ENCODE measurements at regions of chr11 and their contacts with region 1.

Region 1: GRCh38 chr11:128323381-128323780 is 264.0 kb downstream of the ETS1 start:
- DNase-seq: peak in 6 of 9 experiments; percentile 13 to 82 (median 60)
- ATAC-seq: no peak
- H3K4me3 ChIP-seq: no peak overlapping the region
- H3K4me3 Mint-ChIP-seq: peak overlapping the region; percentile 16
- H3K27ac ChIP-seq: peak overlapping the region; percentile 87 to 90
- H3K27ac Mint-ChIP-seq: peak overlapping the region; percentile 94
- H3K4me1 ChIP-seq: peaks cover 93% of the 10 kb centered on the region
- H3K4me1 Mint-ChIP-seq: peaks cover 85% of the 10 kb centered on the region
- H3K27me3 ChIP-seq: no peaks in the 10 kb centered on the region
- H3K27me3 Mint-ChIP-seq: no peaks in the 10 kb centered on the region
- CTCF ChIP-seq: peak; percentile 37

Region 2: GRCh38 chr11:127962416-127962815 is 361.0 kb before region 1 on chr11:
- CTCF ChIA-PET with region 1: no interaction called
- POLR2A ChIA-PET with region 1: no interaction called
- intact Hi-C with region 1: no loop called
- DNase-seq: no peak
- ATAC-seq: no peak
- H3K4me3 ChIP-seq: no peak overlapping the region
- H3K4me3 Mint-ChIP-seq: no peak overlapping the region
- H3K27ac ChIP-seq: no peak overlapping the region
- H3K27ac Mint-ChIP-seq: no peak overlapping the region
- H3K4me1 ChIP-seq: no peaks in the 10 kb centered on the region
- H3K4me1 Mint-ChIP-seq: no peaks in the 10 kb centered on the region
- H3K27me3 ChIP-seq: no peaks in the 10 kb centered on the region
- H3K27me3 Mint-ChIP-seq: peaks cover 32% of the 10 kb centered on the region
- CTCF ChIP-seq: no peak

Region 3: DNA sequence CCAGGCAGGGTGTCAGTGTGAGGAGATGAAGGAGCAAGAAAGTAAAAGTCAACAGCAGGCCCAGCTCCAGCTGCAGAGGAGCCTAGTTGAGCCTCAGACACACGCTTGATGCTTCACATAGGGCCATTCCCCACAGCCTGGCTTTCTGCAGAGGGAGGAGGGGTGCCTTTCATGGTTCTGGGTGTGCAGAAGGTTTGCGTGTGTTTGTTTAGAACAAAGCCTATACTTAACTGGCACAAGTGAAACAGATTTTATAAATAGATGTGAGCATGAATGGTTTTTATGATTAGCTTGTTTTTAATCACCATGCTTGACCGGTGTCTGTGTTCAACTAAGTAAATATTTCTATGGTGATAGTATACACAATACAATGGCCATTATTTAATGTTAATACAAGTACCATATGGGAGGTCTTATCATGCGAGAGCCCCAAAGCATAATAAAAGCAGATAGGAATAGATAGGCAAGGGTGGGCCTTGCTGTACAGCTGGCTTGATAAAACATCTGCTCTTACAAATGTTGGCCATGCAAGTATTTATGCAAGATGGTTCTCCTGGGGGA is 26.2 kb before region 1 on chr11:
- CTCF ChIA-PET with region 1: interaction called, 49 read pairs
- POLR2A ChIA-PET with region 1: interaction called, 11 read pairs
- intact Hi-C with region 1: loop called (anchors 1 to 2 kb)
- DNase-seq: peak in 5 of 9 experiments; percentile 40 to 68 (median 62)
- ATAC-seq: peak; percentile 37
- H3K4me3 ChIP-seq: no peak overlapping the region
- H3K4me3 Mint-ChIP-seq: peak overlapping the region; percentile 53
- H3K27ac ChIP-seq: peak overlapping the region in 1 of 2 experiments; percentile 87
- H3K27ac Mint-ChIP-seq: peak overlapping the region; percentile 99
- H3K4me1 ChIP-seq: peaks cover 90% of the 10 kb centered on the region
- H3K4me1 Mint-ChIP-seq: peaks cover 96% of the 10 kb centered on the region
- H3K27me3 ChIP-seq: no peaks in the 10 kb centered on the region
- H3K27me3 Mint-ChIP-seq: no peaks in the 10 kb centered on the region
- CTCF ChIP-seq: no peak

Region 4: DNA sequence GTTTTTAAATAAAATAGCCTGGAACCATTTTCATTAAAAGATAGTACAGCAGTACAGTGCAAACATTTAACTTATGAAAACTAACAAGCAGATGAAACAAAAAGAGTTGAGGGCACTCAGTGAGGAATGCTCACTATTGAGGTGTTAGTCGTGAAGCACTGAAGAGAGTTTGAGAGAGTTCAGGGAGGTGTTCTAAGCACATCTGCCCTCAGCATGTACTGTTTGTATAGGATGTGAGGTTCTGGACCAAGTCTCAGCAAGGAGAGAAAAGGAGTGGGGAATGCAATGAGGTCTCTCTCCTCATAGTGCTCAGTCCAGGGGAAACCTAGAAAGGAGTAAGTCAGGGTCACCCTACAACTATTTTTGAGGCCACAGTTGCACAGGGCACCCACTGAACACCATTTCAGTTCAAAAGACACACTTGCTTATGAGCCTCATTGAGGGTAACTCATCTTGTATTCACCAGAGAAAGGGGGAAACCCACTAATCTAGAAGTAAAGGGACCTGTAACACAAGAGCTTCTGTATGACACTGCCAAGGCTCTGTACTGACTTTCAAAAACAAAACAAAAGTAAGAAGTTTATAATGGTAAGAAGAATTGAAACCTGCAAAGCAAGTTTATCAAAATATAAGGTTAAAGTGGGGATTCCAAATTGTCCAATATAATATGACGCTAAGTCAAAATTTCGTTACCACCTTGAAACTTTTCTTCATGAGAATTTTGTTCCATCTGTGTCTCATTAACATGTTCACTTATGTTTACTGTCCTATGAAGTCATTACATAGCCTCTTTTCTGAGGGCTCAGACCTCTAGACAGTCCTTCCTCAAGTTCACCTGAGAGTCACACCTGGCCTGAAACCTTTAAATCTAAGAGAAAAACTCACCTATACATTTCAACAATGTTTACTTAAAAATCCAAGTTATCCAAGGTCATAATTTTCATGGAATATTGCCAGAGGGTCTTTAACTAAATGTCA is 11.3 kb before region 1 on chr11:
- CTCF ChIA-PET with region 1: interaction called, 44 read pairs
- POLR2A ChIA-PET with region 1: interaction called, 16 read pairs
- intact Hi-C with region 1: no loop called
- DNase-seq: peak in 3 of 9 experiments; percentile 48 to 76 (median 49)
- ATAC-seq: peak; percentile 94
- H3K4me3 ChIP-seq: peak overlapping the region in 1 of 2 experiments; percentile 10
- H3K4me3 Mint-ChIP-seq: peak overlapping the region; percentile 16
- H3K27ac ChIP-seq: peak overlapping the region; percentile 29 to 36
- H3K27ac Mint-ChIP-seq: peak overlapping the region; percentile 93
- H3K4me1 ChIP-seq: peaks cover 51% of the 10 kb centered on the region
- H3K4me1 Mint-ChIP-seq: peaks cover 76% of the 10 kb centered on the region
- H3K27me3 ChIP-seq: no peaks in the 10 kb centered on the region
- H3K27me3 Mint-ChIP-seq: no peaks in the 10 kb centered on the region
- CTCF ChIP-seq: no peak

Region 5: GRCh38 chr11:128342511-128343134 is 19.2 kb after region 1 on chr11:
- CTCF ChIA-PET with region 1: interaction called, 13 read pairs
- POLR2A ChIA-PET with region 1: interaction called, 16 read pairs
- intact Hi-C with region 1: loop called (anchors 1 to 2 kb)
- DNase-seq: peak in 7 of 9 experiments; percentile 21 to 74 (median 55)
- ATAC-seq: peak; percentile 68
- H3K4me3 ChIP-seq: peak overlapping the region in 1 of 2 experiments; percentile 43
- H3K4me3 Mint-ChIP-seq: no peak overlapping the region
- H3K27ac ChIP-seq: peak overlapping the region; percentile 68 to 77
- H3K27ac Mint-ChIP-seq: peak overlapping the region; percentile 97
- H3K4me1 ChIP-seq: peaks cover 59% of the 10 kb centered on the region
- H3K4me1 Mint-ChIP-seq: peaks cover 79% of the 10 kb centered on the region
- H3K27me3 ChIP-seq: no peaks in the 10 kb centered on the region
- H3K27me3 Mint-ChIP-seq: no peaks in the 10 kb centered on the region
- CTCF ChIP-seq: no peak

Region 6: DNA sequence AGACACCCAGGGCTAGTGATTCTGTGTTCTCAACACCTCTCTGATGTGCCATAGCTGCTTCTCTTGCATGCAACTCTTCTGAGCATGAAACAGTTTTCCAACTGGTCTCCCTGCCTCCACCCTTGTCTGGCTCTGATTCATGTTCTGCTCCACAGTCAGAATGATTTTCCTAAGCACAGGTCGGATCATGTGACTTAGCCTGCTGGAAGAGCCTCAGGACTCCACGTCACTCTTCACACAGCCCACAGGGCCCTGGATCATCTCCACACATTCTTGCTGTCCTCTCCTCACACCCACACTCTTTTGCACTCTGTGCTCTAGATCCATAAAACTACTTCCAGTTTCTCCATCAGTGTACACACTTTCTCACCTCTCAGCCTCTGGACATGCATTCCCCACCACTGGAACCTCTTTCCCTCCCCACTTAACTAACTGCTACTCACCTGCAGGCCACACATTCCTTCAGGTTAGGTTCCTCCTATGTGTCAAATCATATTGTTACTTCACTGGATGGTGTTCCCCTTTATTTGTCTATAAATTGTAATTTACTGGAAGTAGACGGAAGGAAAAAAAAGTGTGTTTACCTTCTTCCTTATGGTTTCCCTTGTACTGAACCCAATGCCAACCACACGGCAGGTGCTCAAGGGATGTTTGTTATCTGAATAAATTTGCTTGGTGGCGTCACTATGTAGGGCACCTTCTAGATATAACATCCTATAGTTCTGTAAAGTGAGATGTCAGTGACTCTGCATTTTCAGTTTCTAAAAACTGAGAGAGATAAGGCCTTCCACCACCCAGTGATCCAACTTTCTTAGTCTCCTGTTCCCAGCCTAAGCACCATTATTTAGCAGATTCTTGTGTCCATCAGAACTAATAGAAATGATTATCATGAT is 130.3 kb after region 1 on chr11:
- CTCF ChIA-PET with region 1: interaction called, 12 read pairs
- POLR2A ChIA-PET with region 1: interaction called, 5 read pairs
- intact Hi-C with region 1: no loop called
- DNase-seq: peak in 1 of 9 experiments; percentile 19
- ATAC-seq: peak; percentile 63
- H3K4me3 ChIP-seq: no peak overlapping the region
- H3K4me3 Mint-ChIP-seq: no peak overlapping the region
- H3K27ac ChIP-seq: peak overlapping the region in 1 of 2 experiments; percentile 32
- H3K27ac Mint-ChIP-seq: peak overlapping the region; percentile 91
- H3K4me1 ChIP-seq: peaks cover 25% of the 10 kb centered on the region
- H3K4me1 Mint-ChIP-seq: peaks cover 76% of the 10 kb centered on the region
- H3K27me3 ChIP-seq: no peaks in the 10 kb centered on the region
- H3K27me3 Mint-ChIP-seq: no peaks in the 10 kb centered on the region
- CTCF ChIP-seq: no peak

Region 7: DNA sequence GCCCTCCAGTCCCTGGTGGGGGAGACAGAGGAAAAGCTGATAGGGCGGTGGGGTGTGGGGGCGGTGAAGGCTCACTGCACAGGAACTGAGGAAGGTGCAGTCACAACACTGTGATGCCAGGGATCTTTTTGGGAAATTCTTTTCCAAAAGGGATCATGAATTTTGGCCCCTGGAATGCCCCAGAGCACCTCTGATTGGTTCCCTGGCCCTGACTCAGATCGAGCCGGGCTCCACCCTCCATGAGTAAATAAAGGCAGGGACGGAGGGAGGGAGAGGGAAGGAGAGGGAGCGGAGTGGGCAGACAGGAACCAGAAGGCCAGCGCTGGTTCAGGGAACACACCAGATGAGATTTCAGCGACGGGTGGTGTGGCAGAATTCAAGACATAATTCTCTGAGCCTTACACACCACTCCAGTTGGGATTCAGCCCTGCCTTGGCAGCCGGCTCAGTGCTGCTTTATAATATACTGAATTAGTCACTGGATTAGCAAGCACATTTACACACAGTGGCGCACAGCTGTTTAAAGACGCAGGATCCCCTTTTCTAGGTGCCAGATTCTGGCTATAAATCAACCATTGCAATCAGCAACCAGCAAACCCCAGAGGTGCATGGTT is 183.7 kb after region 1 on chr11:
- CTCF ChIA-PET with region 1: interaction called, 28 read pairs
- POLR2A ChIA-PET with region 1: interaction called, 7 read pairs
- intact Hi-C with region 1: loop called in 1 of 2 experiments (anchors 5 kb)
- DNase-seq: peak in 4 of 9 experiments; percentile 51 to 65 (median 60)
- ATAC-seq: peak; percentile 30
- H3K4me3 ChIP-seq: peak overlapping the region; percentile 37 to 94
- H3K4me3 Mint-ChIP-seq: peak overlapping the region; percentile 84
- H3K27ac ChIP-seq: peak overlapping the region; percentile 48 to 75
- H3K27ac Mint-ChIP-seq: peak overlapping the region; percentile 98
- H3K4me1 ChIP-seq: peaks cover 100% of the 10 kb centered on the region
- H3K4me1 Mint-ChIP-seq: peaks cover 97% of the 10 kb centered on the region
- H3K27me3 ChIP-seq: no peaks in the 10 kb centered on the region
- H3K27me3 Mint-ChIP-seq: no peaks in the 10 kb centered on the region
- CTCF ChIP-seq: no peak